HEK293 (cell line): ENCODE measurements at regions of chr13 and their contacts with region 1.

Region 1: GRCh38 chr13:36736119-36736726 is 62.4 kb downstream of the SERTM1 start:
- H3K4me3 ChIP-seq: no peak overlapping the region
- H3K27ac ChIP-seq: no peak overlapping the region
- H3K4me1 ChIP-seq: no peaks in the 10 kb centered on the region
- CTCF ChIP-seq: no peak

Region 2: DNA sequence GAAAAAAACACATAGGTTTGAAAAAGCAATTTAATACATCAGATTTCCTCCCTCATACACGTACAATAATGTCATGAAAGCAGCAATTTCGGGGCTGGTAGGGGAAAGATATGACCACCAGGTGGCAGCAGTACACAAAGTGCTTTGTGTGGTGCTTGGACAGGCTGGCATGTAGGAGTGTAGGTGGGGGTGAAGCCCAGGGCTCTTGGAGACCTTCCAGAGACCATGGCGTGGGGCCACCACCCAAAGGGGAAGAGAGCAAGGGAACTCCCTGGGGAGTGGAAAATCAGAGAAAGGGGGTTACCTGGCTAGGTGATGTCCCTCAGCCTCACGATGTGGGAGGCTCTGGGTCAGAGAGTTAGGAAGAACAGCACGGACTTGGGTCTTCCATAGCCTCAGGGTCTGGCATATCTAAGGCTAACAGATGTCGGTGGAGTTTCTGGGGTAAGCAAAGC is 315.8 kb before region 1 on chr13:
- CTCF ChIA-PET with region 1: interaction called, 27 read pairs
- POLR2A ChIA-PET with region 1: no interaction called
- H3K4me3 ChIP-seq: no peak overlapping the region
- H3K27ac ChIP-seq: no peak overlapping the region
- H3K4me1 ChIP-seq: no peaks in the 10 kb centered on the region
- CTCF ChIP-seq: 0 out of 2 replicates have a peak, but pooled peaks have one; percentile 31

Region 3: GRCh38 chr13:36453516-36453915 is 282.7 kb before region 1 on chr13:
- CTCF ChIA-PET with region 1: interaction called, 24 read pairs
- POLR2A ChIA-PET with region 1: no interaction called
- H3K4me3 ChIP-seq: no peak overlapping the region
- H3K27ac ChIP-seq: no peak overlapping the region
- H3K4me1 ChIP-seq: no peaks in the 10 kb centered on the region
- CTCF ChIP-seq: no peak